Activated naive CD4-positive, alpha-beta T cell treated with anti-CD3 and anti-CD28 coated beads for 36 hours (primary cell): ENCODE measurements at regions of chr12 and their contacts with region 1.

Region 1: DNA sequence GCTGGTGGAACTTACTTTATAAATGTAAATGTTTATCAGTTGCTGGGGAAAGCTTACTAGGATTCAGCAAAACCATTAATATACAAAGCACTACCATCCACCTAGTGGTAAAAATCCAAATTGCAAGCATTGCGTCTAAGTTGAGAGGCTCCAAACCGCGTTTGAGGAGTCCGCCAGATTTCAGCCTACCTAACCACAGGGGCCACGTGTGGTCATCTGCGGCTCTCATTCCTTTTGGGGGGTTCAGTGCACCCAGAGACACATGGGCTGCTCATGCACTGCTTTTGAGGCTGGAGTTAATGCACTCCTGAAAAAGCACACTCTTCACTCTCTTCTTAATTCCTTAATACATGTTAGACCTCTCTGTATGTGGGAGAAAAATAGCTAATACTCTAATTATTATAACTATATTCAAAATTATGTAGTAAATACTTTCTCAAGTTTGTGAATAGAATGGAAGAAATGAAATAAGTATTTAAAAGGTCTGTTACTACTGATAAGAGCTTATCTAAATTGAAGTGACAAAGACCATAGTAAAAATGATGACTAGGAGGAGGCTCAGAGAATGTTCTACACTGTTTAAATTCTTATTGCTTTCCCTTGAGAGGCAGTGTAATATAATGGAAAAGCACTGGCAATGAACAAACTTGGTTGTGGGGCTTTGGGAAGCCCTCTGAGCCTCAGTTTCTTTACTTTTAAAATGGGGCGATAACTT is 41.4 kb upstream of the MANSC4 start:
- DNase-seq: peak; percentile 49
- H3K4me3 Mint-ChIP-seq: no peak overlapping the region
- H3K27ac Mint-ChIP-seq: peak overlapping the region; percentile 88
- H3K4me1 Mint-ChIP-seq: peaks cover 43% of the 10 kb centered on the region
- H3K27me3 Mint-ChIP-seq: peaks cover 30% of the 10 kb centered on the region

Region 2: DNA sequence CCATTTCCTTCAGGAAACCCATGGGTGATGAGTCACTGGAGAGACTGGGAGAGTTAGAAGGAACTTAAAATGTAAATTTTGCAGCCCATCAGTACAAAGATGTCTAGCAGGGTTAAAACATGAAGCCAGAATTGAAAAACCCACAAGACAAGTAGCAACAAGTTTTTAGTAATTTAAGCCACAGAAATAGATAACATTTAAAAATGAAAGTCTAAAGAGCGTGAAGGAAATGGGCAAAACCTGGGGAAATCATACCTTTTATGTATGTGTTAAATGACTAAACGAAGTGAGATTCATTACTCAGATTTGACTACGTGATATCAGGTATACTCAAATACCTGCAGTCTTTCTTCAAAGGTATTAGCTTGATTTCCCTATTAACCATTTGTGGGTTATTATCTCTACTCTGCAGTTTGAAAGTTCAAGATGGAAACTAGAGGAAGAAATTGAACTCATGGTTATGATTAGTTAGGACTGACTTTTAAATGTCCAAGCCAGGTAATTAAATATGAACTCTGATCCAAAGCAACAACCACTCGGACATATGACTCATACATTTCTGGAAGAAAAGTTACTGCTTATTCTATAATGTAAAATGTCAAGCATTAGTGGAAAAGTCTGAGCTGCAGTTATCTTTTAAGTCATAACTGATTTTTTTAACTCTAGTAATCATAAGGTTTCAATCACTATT is 1072.5 kb before region 1 on chr12:
- CTCF ChIA-PET with region 1: no interaction called
- intact Hi-C with region 1: loop called (anchors 1 kb)
- DNase-seq: no peak
- H3K4me3 Mint-ChIP-seq: peak overlapping the region; percentile 12
- H3K27ac Mint-ChIP-seq: peak overlapping the region; percentile 88
- H3K4me1 Mint-ChIP-seq: peaks cover 64% of the 10 kb centered on the region
- H3K27me3 Mint-ChIP-seq: no peaks in the 10 kb centered on the region

Region 3: DNA sequence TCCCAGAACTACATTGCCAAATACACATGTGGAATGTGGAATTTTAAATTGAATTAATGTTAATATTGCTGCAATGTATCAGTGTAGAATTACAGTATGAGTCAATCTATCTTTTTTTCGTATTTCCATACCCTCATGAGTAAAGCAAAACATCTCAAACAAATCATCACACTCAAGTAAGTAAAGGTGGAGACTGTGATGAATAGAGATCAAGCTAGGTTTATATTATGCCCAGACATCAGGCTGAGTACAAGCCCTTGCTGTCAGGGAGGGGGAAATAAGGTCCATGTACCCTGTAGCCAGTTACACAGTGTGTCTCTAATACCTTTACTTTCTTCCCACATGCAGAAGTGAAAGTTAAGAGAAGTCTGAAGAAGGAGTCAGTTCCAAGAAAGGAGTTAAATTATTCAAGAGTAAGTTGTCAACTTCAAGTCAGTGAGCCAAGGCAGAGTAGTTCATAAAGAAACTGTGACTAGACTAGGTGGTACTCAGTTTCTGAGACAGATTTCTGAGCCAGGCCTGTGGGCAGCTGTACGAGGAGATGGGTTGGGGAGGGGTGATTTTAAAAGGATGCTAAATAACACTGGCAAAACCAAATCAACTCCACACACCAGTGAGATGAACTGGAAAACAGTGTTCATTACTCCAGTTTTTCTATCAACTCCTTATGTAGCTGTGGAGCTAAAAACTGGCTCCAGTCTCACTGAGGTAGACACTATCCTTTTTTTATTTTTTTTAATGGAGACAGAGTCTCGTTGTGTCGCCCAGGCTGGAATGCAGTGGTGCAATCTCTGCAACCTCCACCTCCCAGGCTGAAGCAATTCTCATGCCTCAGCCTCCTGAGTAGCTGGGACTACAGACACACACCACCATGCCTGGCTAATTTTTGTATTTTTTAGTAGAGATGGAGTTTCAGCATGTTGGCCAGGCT is 601.1 kb before region 1 on chr12:
- CTCF ChIA-PET with region 1: no interaction called
- intact Hi-C with region 1: no loop called
- DNase-seq: peak; percentile 21
- H3K4me3 Mint-ChIP-seq: no peak overlapping the region
- H3K27ac Mint-ChIP-seq: peak overlapping the region; percentile 68
- H3K4me1 Mint-ChIP-seq: peaks cover 17% of the 10 kb centered on the region
- H3K27me3 Mint-ChIP-seq: no peaks in the 10 kb centered on the region

Region 4: DNA sequence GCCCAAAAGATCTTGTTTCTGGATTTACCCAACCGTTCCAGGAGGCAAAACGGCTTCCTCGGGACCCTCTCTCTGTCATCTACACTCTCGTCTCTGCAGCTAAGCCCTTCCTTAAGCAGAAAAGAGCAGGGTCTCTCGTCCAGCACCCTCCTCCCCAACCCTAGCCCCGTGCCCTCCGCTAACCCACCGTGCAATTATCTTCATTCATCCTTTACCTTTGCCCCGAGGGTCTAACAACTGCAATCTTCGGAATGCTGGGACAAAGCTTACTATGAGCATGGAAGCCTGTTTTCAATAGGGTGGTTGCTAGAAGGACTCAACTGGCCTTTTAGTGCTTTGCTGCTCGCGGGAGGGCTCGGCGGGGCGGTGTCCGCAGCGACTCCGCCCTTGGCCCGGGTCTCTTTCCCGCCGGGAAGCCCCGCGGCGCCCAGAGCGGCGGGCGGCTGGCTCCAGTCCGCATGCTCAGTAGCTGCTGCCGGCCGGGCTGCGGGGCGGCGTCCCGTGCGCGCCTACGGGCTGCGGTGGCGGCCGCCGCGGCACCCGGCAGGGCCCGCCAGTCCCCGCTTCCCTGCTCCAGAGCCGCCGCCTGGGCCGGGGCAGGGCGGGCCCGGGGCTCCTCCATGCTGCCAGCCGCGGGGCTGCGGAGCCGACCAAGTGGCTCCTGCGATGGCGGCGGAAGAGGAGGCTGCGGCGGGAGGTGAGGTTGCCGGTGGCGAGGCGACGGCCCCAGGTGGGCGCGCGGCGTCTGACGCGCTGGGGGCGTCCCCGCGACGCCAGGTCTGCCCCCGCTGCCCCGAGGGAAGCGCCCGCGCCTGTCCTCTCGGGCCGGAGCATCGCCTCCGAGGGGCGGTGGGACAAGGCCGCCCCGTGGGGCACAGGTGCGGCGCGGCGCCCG is 488.8 kb before region 1 on chr12 and contains the start of gene BMAL2:
- CTCF ChIA-PET with region 1: no interaction called
- intact Hi-C with region 1: loop called (anchors 1 kb)
- DNase-seq: peak; percentile 44
- H3K4me3 Mint-ChIP-seq: peak within 1 kb of the TSS; percentile 90
- H3K27ac Mint-ChIP-seq: peak within 1 kb of the TSS; percentile 74
- H3K4me1 Mint-ChIP-seq: peaks cover 34% of the 10 kb centered on the region
- H3K27me3 Mint-ChIP-seq: peaks cover 30% of the 10 kb centered on the region
- total RNA-seq, gene BMAL2: 7.9 to 9.2 TPM

Region 5: DNA sequence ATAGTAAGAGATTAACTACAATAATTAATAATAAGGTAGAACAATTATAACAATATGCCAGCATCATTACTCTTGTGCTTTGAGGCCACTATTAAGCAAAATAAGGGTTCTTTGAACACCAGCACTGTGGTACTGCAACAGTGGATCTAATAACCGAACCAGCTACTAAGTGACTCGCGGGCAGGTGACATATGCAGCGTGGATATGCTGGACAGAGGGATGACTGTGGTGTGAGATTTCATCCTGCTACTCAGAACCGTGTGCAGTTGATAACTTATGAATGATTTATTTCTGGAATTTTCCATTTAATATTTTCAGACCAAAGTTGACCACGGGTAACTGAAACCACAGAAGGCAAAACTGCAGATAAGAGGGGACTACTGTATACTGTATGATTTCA is 454.3 kb before region 1 on chr12:
- CTCF ChIA-PET with region 1: no interaction called
- intact Hi-C with region 1: no loop called
- DNase-seq: no peak
- H3K4me3 Mint-ChIP-seq: no peak overlapping the region
- H3K27ac Mint-ChIP-seq: no peak overlapping the region
- H3K4me1 Mint-ChIP-seq: no peaks in the 10 kb centered on the region
- H3K27me3 Mint-ChIP-seq: peaks cover 8% of the 10 kb centered on the region

Region 6: DNA sequence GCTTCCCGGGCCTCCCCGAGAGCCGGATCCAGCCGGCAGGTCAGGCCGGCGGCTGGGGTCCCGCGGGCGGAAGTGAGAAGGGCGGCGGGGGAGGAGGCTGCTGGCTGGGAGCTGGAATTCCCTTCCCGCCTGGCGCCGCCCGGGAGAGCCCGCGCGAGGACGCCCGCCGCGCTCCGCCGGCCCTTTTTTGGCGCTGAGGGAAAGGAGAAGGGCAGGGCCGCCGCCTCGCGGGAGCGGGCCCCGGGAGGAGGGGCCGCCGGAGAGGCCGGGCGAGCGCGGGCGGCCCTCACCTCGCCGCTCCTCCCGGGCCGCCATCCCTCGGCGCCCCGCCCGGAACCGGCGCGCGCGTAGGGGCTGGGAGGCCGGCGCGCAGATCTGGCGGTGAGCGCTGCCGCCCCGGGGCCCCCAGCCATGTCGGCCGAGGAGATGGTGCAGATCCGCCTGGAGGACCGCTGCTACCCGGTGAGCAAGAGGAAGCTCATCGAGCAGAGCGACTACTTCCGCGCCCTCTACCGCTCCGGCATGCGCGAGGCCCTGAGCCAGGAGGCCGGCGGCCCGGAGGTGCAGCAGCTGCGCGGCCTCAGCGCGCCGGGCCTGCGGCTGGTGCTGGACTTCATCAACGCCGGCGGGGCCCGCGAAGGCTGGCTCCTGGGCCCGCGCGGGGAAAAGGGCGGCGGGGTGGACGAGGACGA is 41.4 kb before region 1 on chr12 and contains the starts of genes KLHL42 and MANSC4:
- CTCF ChIA-PET with region 1: interaction called, 13 read pairs
- intact Hi-C with region 1: loop called (anchors 1 kb)
- DNase-seq: peak; percentile 71
- H3K4me3 Mint-ChIP-seq: peak within 1 kb of the TSS; percentile 82
- H3K27ac Mint-ChIP-seq: peak within 1 kb of the TSS; percentile 80
- H3K4me1 Mint-ChIP-seq: peaks cover 27% of the 10 kb centered on the region
- H3K27me3 Mint-ChIP-seq: no peaks in the 10 kb centered on the region
- total RNA-seq, gene KLHL42: 9.4 to 9.8 TPM
- total RNA-seq, gene MANSC4: not detected

Region 7: GRCh38 chr12:27861428-27862167 is 40.2 kb after region 1 on chr12:
- CTCF ChIA-PET with region 1: interaction called, 6 read pairs
- intact Hi-C with region 1: loop called (anchors 1 kb)
- DNase-seq: peak; percentile 35
- H3K4me3 Mint-ChIP-seq: no peak overlapping the region
- H3K27ac Mint-ChIP-seq: no peak overlapping the region
- H3K4me1 Mint-ChIP-seq: peaks cover 26% of the 10 kb centered on the region
- H3K27me3 Mint-ChIP-seq: peaks cover 3% of the 10 kb centered on the region

Region 8: GRCh38 chr12:28172434-28173030 is 351.1 kb after region 1 on chr12:
- CTCF ChIA-PET with region 1: no interaction called
- intact Hi-C with region 1: loop called (anchors 5 kb)
- DNase-seq: no peak
- H3K4me3 Mint-ChIP-seq: no peak overlapping the region
- H3K27ac Mint-ChIP-seq: no peak overlapping the region
- H3K4me1 Mint-ChIP-seq: peaks cover 9% of the 10 kb centered on the region
- H3K27me3 Mint-ChIP-seq: no peaks in the 10 kb centered on the region

Region 9: GRCh38 chr12:28360253-28360652 is 538.8 kb after region 1 on chr12:
- CTCF ChIA-PET with region 1: no interaction called
- intact Hi-C with region 1: no loop called
- DNase-seq: no peak
- H3K4me3 Mint-ChIP-seq: no peak overlapping the region
- H3K27ac Mint-ChIP-seq: no peak overlapping the region
- H3K4me1 Mint-ChIP-seq: no peaks in the 10 kb centered on the region
- H3K27me3 Mint-ChIP-seq: no peaks in the 10 kb centered on the region

Region 10: DNA sequence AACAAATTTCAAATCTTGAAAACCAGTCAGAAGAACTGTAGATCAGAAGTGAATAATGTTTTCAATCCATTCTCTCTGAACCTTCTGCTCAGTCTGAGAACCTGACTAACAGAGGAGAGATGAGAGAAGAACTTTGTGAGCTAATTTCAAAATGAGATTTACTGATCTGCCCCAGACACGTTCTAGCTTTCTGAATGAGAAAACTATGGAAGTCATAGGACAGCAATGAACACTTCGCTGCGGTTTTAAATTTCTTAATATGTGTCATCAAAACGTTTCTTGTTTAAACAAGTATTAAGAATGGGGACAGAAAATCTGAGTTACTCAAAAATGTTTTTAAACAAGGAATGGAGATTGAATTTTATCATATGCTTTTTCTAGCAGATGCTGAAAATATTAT is 1261.1 kb after region 1 on chr12:
- CTCF ChIA-PET with region 1: no interaction called
- intact Hi-C with region 1: loop called (anchors 1 kb)
- DNase-seq: no peak
- H3K4me3 Mint-ChIP-seq: no peak overlapping the region
- H3K27ac Mint-ChIP-seq: no peak overlapping the region
- H3K4me1 Mint-ChIP-seq: peaks cover 7% of the 10 kb centered on the region
- H3K27me3 Mint-ChIP-seq: peaks cover 9% of the 10 kb centered on the region